Endothelial cell of umbilical vein (primary cell): ENCODE measurements at regions of chr10 and their contacts with region 1.

Region 1: DNA sequence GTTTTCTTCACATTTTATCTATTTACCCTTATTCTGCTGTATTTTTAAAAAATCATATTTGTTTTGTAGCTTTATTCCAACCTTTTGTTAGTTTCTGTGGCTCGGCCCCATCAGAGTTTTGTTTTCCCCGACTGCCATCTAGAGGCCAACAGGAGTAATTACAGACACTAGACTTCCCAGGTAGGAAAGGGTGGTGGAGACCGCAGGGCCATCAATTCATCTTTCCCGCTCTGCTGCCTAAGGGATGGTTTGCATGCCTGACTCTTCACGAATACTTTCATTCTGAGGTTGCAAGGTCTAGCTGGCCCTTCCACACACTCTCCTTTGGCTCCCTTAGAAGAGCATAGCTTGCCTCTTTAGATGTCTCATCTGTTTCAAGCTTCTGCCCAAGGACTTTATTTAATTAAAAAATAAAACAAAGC is 38.3 kb downstream of the LYZL2 start:
- DNase-seq: peak; percentile 65
- H3K4me3 ChIP-seq: no peak overlapping the region
- H3K27ac ChIP-seq: no peak overlapping the region
- H3K4me1 ChIP-seq: no peaks in the 10 kb centered on the region
- H3K27me3 ChIP-seq: peaks cover 2 to 16% of the 10 kb centered on the region in 2 experiments
- CTCF ChIP-seq: peak; percentile 65 to 74
- POLR2A ChIP-seq: no peak

Region 2: DNA sequence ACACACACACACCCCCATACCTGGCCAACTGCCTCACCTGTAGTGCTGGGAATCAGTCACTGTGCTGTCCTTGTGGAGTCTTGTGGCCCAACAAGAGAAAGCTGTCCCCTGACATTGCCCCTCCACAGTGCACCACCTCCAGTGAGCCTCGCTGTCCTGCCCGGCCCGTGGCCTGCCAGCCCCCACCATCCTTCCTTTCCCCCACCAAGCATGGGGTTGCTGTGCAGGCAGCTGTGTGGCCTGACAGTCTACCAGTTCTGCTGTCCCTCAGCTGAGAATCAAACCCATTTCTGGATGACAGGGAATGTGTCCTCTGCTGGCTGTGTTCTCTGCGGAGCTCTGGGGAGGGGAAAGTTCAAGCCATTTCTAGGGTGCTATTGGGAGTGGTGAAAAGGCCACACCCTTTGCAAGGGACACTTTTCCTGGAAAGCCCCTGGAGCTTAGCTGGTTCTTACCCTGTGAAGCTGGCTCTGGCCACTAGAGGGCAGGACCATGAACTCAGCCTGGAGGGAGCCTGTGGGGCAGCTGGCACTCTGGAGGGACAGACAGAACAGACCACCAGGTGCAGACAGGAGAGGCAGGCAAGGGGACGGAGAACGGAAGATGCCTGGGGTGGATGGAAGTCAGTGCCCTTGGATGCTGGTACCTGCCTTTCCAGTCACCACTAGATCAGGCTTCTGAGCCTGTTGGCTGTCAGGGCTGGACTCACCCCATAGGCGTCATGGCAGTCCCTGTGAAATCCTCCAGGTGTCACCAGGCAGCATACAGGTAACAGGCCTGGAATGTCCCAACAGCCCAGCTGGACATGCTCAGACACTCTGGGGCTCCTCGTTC is 231.7 kb before region 1 on chr10:
- CTCF ChIA-PET with region 1: interaction called, 93 read pairs
- POLR2A ChIA-PET with region 1: no interaction called
- dilution Hi-C with region 1: no loop called
- intact Hi-C with region 1: loop called (anchors 1 kb)
- DNase-seq: peak; percentile 56
- H3K4me3 ChIP-seq: no peak overlapping the region
- H3K27ac ChIP-seq: no peak overlapping the region
- H3K4me1 ChIP-seq: no peaks in the 10 kb centered on the region
- H3K27me3 ChIP-seq: peaks cover 2 to 9% of the 10 kb centered on the region in 2 experiments
- CTCF ChIP-seq: peak; percentile 78 to 88
- POLR2A ChIP-seq: no peak

Region 3: DNA sequence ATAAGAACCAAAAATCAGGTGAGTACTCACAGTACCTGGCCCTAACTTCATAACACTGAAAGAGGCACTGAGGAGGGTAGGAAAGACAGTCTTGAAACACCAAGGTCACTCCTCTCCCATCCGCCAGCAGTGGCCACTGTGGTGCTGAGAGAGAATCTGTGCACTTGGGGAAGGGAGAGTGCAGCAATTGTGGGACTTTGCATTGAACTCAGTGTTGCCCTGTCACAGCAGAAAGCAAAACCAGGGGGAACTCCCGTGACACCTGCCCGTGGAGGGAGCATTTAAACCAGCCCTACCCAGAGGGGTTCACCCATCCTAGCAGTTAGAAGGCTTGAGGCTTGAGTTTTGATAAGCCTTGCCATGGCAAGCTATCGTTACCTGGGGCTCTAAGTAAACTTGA is 192.5 kb before region 1 on chr10:
- CTCF ChIA-PET with region 1: interaction called, 169 read pairs
- POLR2A ChIA-PET with region 1: no interaction called
- dilution Hi-C with region 1: no loop called
- intact Hi-C with region 1: no loop called
- DNase-seq: no peak
- H3K4me3 ChIP-seq: no peak overlapping the region
- H3K27ac ChIP-seq: no peak overlapping the region
- H3K4me1 ChIP-seq: no peaks in the 10 kb centered on the region
- H3K27me3 ChIP-seq: peaks cover 22 to 24% of the 10 kb centered on the region in 2 experiments
- CTCF ChIP-seq: no peak
- POLR2A ChIP-seq: no peak

Region 4: GRCh38 chr10:30433730-30434272 is 157.5 kb before region 1 on chr10 and contains the start of gene MAP3K8:
- CTCF ChIA-PET with region 1: interaction called, 19 read pairs
- POLR2A ChIA-PET with region 1: no interaction called
- dilution Hi-C with region 1: no loop called
- intact Hi-C with region 1: no loop called
- DNase-seq: peak; percentile 97
- H3K4me3 ChIP-seq: peak within 1 kb of the TSS; percentile 70 to 78 (median 74)
- H3K27ac ChIP-seq: peak within 1 kb of the TSS; percentile 84
- H3K4me1 ChIP-seq: peaks cover 21% of the 10 kb centered on the region
- H3K27me3 ChIP-seq: no peaks in the 10 kb centered on the region
- CTCF ChIP-seq: no peak
- POLR2A ChIP-seq: peak; percentile 88
- total RNA-seq, gene MAP3K8: 8.1 and 10.6 TPM in 2 replicates

Region 5: GRCh38 chr10:30542001-30542894 is 49.0 kb before region 1 on chr10:
- CTCF ChIA-PET with region 1: interaction called, 33 read pairs
- POLR2A ChIA-PET with region 1: no interaction called
- dilution Hi-C with region 1: no loop called
- intact Hi-C with region 1: no loop called
- DNase-seq: no peak
- H3K4me3 ChIP-seq: no peak overlapping the region
- H3K27ac ChIP-seq: no peak overlapping the region
- H3K4me1 ChIP-seq: peaks cover 10% of the 10 kb centered on the region
- H3K27me3 ChIP-seq: peaks cover 0 to 1% of the 10 kb centered on the region in 2 experiments
- CTCF ChIP-seq: no peak
- POLR2A ChIP-seq: no peak

Region 6: GRCh38 chr10:30606313-30606712 is 15.1 kb after region 1 on chr10:
- CTCF ChIA-PET with region 1: interaction called, 28 read pairs
- POLR2A ChIA-PET with region 1: no interaction called
- dilution Hi-C with region 1: no loop called
- intact Hi-C with region 1: no loop called
- DNase-seq: no peak
- H3K4me3 ChIP-seq: no peak overlapping the region
- H3K27ac ChIP-seq: no peak overlapping the region
- H3K4me1 ChIP-seq: peaks cover 5% of the 10 kb centered on the region
- H3K27me3 ChIP-seq: no peaks in the 10 kb centered on the region
- CTCF ChIP-seq: no peak
- POLR2A ChIP-seq: no peak